Activated naive CD8-positive, alpha-beta T cell treated with anti-CD3 and anti-CD28 coated beads, Interleukin-2, amount 10 ng/mL, durations not matched to agents 7 days and 5 days (primary cell): ENCODE measurements at regions of chr1 and their contacts with region 1.

Region 1: DNA sequence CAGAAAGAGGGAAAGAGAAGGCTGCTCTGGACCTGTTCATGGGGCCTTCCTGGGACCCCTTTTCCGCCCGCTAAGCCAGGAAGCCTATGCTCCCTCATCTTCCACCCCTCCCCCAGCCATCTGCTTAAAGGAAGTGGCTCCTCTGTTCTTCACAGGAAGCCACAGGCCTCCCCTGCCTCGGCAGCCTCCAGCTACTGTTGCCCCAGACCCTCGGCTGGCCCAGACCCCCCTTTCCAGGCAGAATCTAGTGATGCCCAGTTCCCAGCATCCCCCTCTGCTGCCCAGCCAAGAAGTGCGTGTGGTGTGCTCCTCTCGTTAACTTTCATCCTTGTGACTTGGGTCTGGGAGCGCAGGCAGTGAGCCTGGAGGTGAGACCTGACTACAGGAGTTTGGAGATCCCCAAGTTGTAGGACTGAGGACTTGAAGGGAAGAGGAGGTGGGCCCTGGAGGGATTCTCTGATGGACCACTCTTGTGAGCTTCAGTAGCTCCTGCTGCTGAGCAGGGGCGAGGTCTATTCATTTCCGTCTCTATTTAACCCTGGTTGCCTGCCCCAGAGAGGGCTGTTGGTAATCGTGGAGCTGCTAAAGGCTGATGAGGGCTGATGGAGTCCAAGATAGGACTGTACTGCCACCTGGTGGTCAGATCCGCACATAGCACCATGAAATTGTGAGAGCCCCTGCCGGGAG is 9.1 kb downstream of the IFI6 start:
- DNase-seq: peak; percentile 88
- ATAC-seq: peak; percentile 88
- H3K4me3 Mint-ChIP-seq: peak overlapping the region; percentile 72
- H3K27ac Mint-ChIP-seq: peak overlapping the region; percentile 98
- H3K4me1 Mint-ChIP-seq: peaks cover 50% of the 10 kb centered on the region
- H3K27me3 Mint-ChIP-seq: no peaks in the 10 kb centered on the region

Region 2: DNA sequence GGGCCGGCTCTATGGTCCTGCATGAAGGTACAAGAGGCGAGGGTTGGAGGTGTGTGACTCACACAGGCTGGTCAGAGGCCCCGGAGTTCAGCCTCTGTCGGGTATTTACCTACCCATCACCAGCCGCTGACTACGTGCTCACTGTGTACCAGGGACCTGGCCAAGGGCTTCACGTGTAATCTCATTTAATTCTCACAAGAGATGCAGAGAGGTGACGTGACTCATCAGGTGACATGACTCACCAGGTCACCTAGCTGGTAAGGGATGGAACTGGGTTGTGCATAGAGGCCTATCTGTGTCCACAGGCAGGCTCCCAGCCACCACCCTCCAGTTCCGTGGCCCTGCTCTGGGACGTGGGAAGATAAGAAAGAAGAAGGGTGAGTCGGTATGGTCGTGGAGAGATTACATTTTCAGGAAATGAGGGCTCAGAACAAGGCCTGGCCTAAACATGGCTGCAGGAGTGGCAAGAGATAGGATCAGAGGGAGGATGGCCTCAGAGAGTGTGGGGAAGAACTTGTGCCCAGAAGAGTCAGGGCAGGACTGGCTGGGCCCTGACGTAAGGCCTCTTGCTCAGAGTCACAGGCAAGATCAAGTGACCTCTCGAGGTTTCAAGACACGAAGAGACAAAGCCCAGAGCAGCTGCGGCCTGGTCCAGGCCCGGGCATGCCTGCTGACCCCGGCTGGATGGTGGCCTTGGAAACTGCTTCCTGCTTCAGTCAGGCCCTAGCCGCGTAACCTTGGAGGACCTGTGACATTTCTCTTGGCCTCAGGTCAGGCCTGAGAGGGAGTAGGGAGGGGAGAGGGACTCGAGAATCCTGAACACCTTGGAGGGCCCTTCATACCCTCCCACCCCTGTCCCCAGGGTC is 120.2 kb before region 1 on chr1:
- POLR2A ChIA-PET with region 1: no interaction called
- DNase-seq: no peak
- ATAC-seq: peak; percentile 39
- H3K4me3 Mint-ChIP-seq: no peak overlapping the region
- H3K27ac Mint-ChIP-seq: peak overlapping the region; percentile 39
- H3K4me1 Mint-ChIP-seq: peaks cover 9% of the 10 kb centered on the region
- H3K27me3 Mint-ChIP-seq: no peaks in the 10 kb centered on the region

Region 3: DNA sequence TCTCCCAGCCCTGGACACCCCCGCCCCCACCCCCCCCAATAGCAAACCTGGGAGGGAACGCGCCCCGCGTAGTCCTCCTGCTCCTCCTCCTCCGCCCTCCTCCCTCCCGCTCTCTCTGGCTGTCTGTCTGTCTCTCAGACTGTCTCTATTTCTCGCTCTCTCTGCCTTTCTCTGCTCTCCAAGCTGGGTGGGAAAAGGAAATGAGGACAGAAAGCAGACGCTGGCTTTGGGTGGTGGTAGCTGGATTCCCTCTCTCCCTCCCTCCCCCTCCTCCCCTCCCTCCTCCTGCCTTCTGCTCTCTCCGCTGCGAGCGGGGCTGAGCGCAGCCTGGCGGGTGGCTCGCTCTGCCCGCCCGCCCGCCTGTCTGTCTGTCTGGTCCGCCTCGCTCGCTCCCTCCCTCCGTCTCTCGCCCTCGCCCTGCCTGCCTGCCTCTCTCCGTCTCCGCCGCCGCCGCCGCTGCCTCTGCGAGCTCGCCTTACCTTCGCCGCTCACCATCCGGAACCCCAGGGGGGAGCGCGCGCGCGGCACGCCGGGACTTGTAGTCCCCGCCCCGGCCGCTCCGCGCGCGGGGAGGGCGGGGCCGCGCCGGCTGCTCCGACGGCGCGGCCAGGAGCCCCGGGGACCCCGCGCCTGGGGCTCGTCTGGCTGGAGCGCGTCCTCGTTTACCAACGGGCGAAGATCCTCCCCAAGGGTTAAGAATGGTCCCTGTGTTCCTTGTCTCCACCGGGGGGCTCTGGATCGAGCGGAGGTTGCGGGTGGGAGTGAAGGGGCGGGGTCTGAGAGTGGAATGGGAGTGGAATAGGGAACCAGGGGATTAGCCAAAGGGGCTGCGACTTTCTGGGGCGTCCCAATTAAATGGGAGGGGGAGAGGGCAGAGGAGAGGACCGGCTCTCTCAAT is 58.9 kb before region 1 on chr1 and contains the start of gene AHDC1:
- POLR2A ChIA-PET with region 1: interaction called, 71 read pairs
- DNase-seq: peak; percentile 95
- ATAC-seq: peak; percentile 79
- H3K4me3 Mint-ChIP-seq: peak within 1 kb of the TSS; percentile 96
- H3K27ac Mint-ChIP-seq: peak within 1 kb of the TSS; percentile 89
- H3K4me1 Mint-ChIP-seq: peaks cover 34% of the 10 kb centered on the region
- H3K27me3 Mint-ChIP-seq: no peaks in the 10 kb centered on the region
- total RNA-seq, gene AHDC1: 21.6 to 22.2 TPM

Region 4: GRCh38 chr1:27616441-27616840 is 46.4 kb before region 1 on chr1:
- POLR2A ChIA-PET with region 1: interaction called, 71 read pairs
- DNase-seq: no peak
- ATAC-seq: no peak
- H3K4me3 Mint-ChIP-seq: no peak overlapping the region
- H3K27ac Mint-ChIP-seq: no peak overlapping the region
- H3K4me1 Mint-ChIP-seq: peaks cover 28% of the 10 kb centered on the region
- H3K27me3 Mint-ChIP-seq: no peaks in the 10 kb centered on the region

Region 5: DNA sequence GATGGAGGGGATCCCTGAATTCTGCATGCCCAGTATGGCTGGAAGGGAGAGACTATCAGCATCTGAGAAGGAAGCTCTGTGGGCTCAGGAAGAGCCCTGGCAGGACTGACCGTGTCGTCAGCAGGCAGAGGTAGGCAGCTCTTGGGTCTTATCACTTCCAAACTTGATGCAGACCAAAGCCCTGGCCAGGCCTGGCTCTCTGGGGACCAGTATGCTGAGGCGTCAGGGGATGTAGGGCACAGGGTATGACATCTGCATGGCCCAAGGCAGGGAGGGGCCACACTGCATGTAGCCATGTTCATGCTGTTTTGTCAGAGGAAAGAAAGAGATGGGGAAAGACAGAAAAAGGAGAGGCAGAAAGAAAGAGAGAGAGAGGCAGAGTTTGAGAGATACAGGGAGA is 34.1 kb before region 1 on chr1:
- POLR2A ChIA-PET with region 1: interaction called, 11 read pairs
- DNase-seq: no peak
- ATAC-seq: no peak
- H3K4me3 Mint-ChIP-seq: no peak overlapping the region
- H3K27ac Mint-ChIP-seq: peak overlapping the region; percentile 13
- H3K4me1 Mint-ChIP-seq: peaks cover 47% of the 10 kb centered on the region
- H3K27me3 Mint-ChIP-seq: peaks cover 7% of the 10 kb centered on the region

Region 6: DNA sequence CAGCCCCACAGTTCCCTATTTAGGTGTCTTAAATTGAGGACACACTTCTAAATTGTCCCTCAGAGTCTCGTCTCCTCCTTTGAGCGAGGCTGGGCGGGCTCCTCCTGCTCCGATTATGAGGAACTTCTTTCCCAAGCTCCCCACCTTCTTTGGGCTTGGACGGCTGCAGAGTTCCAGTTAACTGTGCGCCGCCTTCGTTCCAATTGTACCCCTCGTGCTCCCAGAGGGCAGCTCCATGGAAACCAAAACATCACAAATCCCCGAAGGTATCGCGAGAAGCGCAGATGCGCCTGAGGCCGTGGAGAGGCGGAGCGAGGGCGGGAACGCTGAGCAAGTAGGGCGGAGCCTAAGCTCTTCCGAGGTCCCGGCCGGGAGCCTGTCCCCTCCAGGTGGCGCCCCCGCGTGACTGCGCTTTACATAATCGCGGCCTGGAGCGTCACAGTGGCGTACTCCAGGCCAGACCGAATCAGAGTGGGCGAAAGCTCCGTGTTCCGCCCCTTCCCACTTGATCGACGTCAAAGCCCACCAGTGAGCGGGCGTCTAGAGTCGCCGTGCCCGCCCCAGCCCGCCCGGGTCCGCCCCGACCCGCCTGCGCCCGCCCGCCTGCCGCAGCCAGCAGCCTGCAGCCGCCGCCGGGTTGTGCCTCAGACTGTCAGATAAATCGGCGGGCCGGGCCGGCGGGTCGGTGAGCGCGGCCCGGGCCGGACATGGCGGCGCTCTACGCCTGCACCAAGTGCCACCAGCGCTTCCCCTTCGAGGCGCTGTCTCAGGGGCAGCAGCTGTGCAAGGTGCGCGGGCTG is 62.7 kb after region 1 on chr1 and contains the start of gene FAM76A:
- POLR2A ChIA-PET with region 1: interaction called, 12 read pairs
- DNase-seq: peak; percentile 99
- ATAC-seq: peak; percentile 96
- H3K4me3 Mint-ChIP-seq: peak within 1 kb of the TSS; percentile 91
- H3K27ac Mint-ChIP-seq: peak within 1 kb of the TSS; percentile 95
- H3K4me1 Mint-ChIP-seq: peaks cover 15% of the 10 kb centered on the region
- H3K27me3 Mint-ChIP-seq: peaks cover 4% of the 10 kb centered on the region
- total RNA-seq, gene FAM76A: 17.5 to 18.7 TPM